Common myeloid progenitor, CD34-positive (primary cell): ENCODE measurements at regions of chr17 and their contacts with region 1.

Region 1: DNA sequence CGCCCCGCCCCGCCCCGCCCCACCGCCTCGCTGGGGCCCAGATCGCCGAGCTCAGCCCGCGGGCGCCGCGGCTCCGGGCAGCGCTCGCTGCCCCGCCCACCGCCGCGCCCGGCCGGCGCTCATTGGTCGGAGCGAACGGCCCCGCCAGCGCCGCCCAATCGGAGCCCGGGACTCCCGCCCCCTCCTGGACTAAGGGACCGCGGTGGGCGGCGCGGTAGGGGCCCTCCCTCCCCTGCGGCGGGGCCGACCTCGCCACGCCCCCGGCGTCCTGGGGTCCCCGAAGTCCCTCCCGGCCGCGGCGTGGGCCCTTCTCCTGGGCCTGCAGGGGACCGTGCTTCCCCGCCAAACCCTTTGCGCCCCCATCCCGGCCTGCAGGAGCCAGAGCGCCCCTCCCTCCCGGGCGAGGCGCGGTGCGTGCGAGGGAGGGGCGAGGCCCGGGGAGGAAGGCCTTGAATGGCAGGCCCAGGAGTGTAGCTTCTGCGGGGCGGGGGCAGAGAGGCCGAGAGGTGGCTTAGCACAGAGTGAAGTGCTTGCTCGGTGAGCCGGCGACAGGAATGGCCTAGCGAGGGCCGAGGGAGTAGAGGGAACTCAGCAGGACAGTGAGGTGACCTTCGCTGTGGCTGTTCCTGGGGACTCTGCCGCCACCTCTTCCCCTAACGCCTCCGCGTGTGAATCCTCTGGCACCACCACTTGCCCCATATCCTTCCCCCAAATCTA is at the start of gene CAMKK1:
- DNase-seq: peak; percentile 80 to 91 (median 89)
- H3K4me3 ChIP-seq: peak within 1 kb of the TSS; percentile 38 to 78 (median 66)
- H3K27ac ChIP-seq: no peak within 1 kb of the TSS
- H3K4me1 ChIP-seq: peaks cover 2 to 38% (median 32%) of the 10 kb centered on the region in 4 experiments
- H3K27me3 ChIP-seq: no peaks in the 10 kb centered on the region

Region 2: GRCh38 chr17:3905017-3905520 is 11.9 kb after region 1 on chr17:
- CTCF ChIA-PET with region 1: interaction called, 14 read pairs
- POLR2A ChIA-PET with region 1: interaction called, 5 read pairs
- DNase-seq: peak in 2 of 3 donors; percentile 74 to 80
- H3K4me3 ChIP-seq: peak overlapping the region in 1 of 7 experiments; percentile 43
- H3K27ac ChIP-seq: peak overlapping the region in 1 of 2 experiments; percentile 25
- H3K4me1 ChIP-seq: peaks cover 0 to 20% (median 12%) of the 10 kb centered on the region in 4 experiments
- H3K27me3 ChIP-seq: no peaks in the 10 kb centered on the region